ENCODE measurements at regions of chr2 and their contacts with region 1.

Region 1: DNA sequence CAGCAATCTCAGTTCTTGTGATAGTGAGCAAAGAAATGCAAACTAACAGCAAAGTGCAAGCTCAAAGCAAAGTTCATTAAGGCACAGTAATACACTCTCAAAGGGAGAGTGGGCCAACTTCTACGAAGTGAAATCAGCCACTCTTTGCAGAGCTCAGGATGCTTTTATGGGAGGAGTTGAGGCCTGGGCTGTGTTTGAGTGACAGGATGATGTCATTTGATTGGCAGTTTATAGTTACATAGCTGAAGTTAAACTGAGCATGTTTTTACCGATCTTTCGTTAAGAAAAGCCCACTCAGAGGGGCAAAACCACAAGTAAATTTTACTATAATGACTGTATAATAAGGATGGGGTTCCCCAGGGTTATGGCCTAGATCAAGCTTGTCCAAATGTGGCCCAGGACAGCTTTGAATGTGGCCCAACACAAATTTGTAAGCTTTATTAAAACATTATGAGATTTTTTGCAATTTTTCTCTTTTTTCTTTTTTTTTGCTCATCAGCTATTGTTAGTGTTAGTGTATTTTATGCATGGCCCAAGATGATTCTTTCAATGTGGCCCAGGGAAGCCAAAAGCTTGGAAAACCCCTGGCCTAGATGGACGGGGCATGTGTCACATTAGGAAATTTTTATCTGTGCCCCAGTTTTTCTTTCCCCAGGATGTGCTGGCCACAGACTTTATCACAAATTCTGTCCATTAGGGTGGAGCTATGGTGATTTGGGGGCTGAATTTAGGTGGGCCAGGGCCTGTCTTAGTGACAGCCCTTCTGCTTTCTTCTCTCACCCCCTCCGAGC is 8.3 kb upstream of the DNAH7 start:
- DNase-seq: no peak
- H3K4me3 Mint-ChIP-seq: no peak overlapping the region
- H3K27ac Mint-ChIP-seq: no peak overlapping the region
- H3K4me1 Mint-ChIP-seq: no peaks in the 10 kb centered on the region
- H3K27me3 Mint-ChIP-seq: no peaks in the 10 kb centered on the region
- CTCF ChIP-seq: no peak

Region 2: DNA sequence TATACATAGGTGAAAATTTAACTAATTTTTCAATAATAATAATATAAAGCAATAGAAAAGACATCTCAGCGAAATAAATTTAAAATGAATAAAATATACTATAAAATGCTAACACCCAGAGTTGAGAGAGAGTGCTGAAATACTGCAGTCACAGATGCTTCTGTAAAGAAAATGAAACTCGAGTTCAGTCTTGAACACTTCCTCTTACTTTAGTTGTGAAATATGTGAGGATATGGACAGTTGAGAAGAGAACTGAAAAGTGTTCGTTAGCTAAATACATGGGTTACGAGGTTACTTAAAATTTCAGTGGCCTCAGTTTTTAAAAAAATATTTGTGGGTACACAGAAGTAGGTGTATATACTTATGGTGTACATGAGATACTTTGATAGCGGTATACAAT is 115.1 kb before region 1 on chr2:
- CTCF ChIA-PET with region 1: no interaction called
- POLR2A ChIA-PET with region 1: no interaction called
- intact Hi-C with region 1: no loop called
- DNase-seq: no peak
- H3K4me3 Mint-ChIP-seq: no peak overlapping the region
- H3K27ac Mint-ChIP-seq: no peak overlapping the region
- H3K4me1 Mint-ChIP-seq: no peaks in the 10 kb centered on the region
- H3K27me3 Mint-ChIP-seq: no peaks in the 10 kb centered on the region
- CTCF ChIP-seq: no peak

Region 3: GRCh38 chr2:196000551-196000950 is 76.4 kb before region 1 on chr2:
- CTCF ChIA-PET with region 1: no interaction called
- POLR2A ChIA-PET with region 1: no interaction called
- intact Hi-C with region 1: no loop called
- DNase-seq: no peak
- H3K4me3 Mint-ChIP-seq: no peak overlapping the region
- H3K27ac Mint-ChIP-seq: no peak overlapping the region
- H3K4me1 Mint-ChIP-seq: no peaks in the 10 kb centered on the region
- H3K27me3 Mint-ChIP-seq: no peaks in the 10 kb centered on the region
- CTCF ChIP-seq: no peak

Region 4: GRCh38 chr2:196101325-196101991 is 24.5 kb after region 1 on chr2:
- CTCF ChIA-PET with region 1: interaction called, 12 read pairs
- POLR2A ChIA-PET with region 1: no interaction called
- intact Hi-C with region 1: no loop called
- DNase-seq: no peak
- H3K4me3 Mint-ChIP-seq: no peak overlapping the region
- H3K27ac Mint-ChIP-seq: no peak overlapping the region
- H3K4me1 Mint-ChIP-seq: no peaks in the 10 kb centered on the region
- H3K27me3 Mint-ChIP-seq: no peaks in the 10 kb centered on the region
- CTCF ChIP-seq: no peak

Region 5: DNA sequence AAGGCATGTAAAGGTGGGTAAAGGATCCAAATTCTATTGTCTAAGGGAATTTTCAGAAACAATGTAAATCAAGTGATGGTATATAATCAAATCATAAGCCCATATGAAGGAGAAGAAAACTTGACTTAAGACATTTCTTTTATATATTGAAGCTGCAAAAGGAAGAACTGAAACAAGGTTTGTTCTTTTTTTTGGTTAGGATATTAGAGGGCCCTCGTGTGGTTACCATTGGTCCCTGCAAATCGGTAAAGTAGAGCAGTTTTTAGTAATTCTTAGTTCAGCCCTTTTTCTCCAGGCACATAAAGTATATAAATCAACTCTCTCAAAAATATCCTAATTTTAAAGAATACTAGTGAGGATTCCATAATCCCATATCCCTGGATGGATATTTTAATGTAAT is 200.0 kb after region 1 on chr2:
- CTCF ChIA-PET with region 1: interaction called, 104 read pairs
- POLR2A ChIA-PET with region 1: interaction called, 4 read pairs
- intact Hi-C with region 1: loop called (anchors 1 kb)
- DNase-seq: no peak
- H3K4me3 Mint-ChIP-seq: no peak overlapping the region
- H3K27ac Mint-ChIP-seq: no peak overlapping the region
- H3K4me1 Mint-ChIP-seq: peaks cover 20% of the 10 kb centered on the region
- H3K27me3 Mint-ChIP-seq: no peaks in the 10 kb centered on the region
- CTCF ChIP-seq: peak; percentile 64

Region 6: GRCh38 chr2:196282381-196282780 is 205.4 kb after region 1 on chr2:
- CTCF ChIA-PET with region 1: interaction called, 104 read pairs
- POLR2A ChIA-PET with region 1: no interaction called
- intact Hi-C with region 1: loop called (anchors 1 kb)
- DNase-seq: no peak
- H3K4me3 Mint-ChIP-seq: no peak overlapping the region
- H3K27ac Mint-ChIP-seq: no peak overlapping the region
- H3K4me1 Mint-ChIP-seq: no peaks in the 10 kb centered on the region
- H3K27me3 Mint-ChIP-seq: no peaks in the 10 kb centered on the region
- CTCF ChIP-seq: no peak

Region 7: DNA sequence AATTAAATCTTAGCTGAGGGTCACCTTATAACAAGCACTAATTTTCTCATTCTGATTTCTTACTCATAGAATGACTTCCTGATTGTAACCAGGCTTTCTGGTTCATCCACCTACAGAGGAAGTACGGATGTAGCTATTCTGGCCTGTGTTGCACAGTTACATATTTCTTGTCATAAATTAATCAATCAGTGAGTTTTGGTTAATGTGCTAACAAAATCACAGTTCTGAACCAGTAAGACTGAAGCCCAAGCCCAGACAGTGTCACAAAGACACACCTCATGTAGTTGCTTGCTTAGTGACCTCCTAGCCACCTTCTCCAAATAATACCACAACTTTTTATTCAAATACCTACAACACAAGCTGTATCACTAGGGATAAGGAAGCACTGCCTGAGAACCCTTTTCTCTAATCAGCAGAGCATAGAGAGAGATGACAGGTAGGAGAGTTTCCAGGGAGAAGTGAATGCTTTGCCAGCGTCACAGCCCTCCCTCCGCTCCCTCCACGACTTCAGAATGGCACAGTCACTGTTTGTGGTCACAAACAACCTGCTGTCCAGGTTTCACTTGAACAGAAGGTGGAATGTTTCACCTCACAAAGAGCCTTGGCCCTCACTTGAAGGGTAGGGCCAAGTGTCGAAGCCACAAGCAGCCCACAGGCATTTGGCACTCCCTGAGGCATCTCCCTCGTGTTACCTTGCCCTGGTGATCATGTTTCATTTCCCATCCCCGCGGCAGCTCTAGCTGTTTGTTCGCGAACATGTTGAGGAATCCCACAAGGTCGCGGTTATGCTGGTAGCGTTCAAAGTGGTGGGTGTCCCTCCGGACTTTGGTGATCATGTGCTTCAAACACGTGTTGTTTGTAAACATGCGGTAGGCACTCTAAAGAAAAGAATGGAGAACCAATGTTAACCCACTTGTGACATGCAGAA is 215.2 kb after region 1 on chr2:
- CTCF ChIA-PET with region 1: interaction called, 19 read pairs
- POLR2A ChIA-PET with region 1: interaction called, 16 read pairs
- intact Hi-C with region 1: loop called (anchors 5 kb)
- DNase-seq: peak; percentile 87
- H3K4me3 Mint-ChIP-seq: peak overlapping the region; percentile 4
- H3K27ac Mint-ChIP-seq: peak overlapping the region; percentile 31
- H3K4me1 Mint-ChIP-seq: peaks cover 36% of the 10 kb centered on the region
- H3K27me3 Mint-ChIP-seq: no peaks in the 10 kb centered on the region
- CTCF ChIP-seq: no peak

Region 8: GRCh38 chr2:196337208-196337953 is 260.4 kb after region 1 on chr2:
- CTCF ChIA-PET with region 1: interaction called, 60 read pairs
- POLR2A ChIA-PET with region 1: no interaction called
- intact Hi-C with region 1: loop called (anchors 1 kb)
- DNase-seq: peak; percentile 49
- H3K4me3 Mint-ChIP-seq: no peak overlapping the region
- H3K27ac Mint-ChIP-seq: no peak overlapping the region
- H3K4me1 Mint-ChIP-seq: no peaks in the 10 kb centered on the region
- H3K27me3 Mint-ChIP-seq: no peaks in the 10 kb centered on the region
- CTCF ChIP-seq: peak; percentile 35

Region 9: GRCh38 chr2:196750982-196751635 is 674.1 kb after region 1 on chr2:
- CTCF ChIA-PET with region 1: interaction called, 4 read pairs
- POLR2A ChIA-PET with region 1: no interaction called
- intact Hi-C with region 1: loop called (anchors 10 kb)
- DNase-seq: peak; percentile 65
- H3K4me3 Mint-ChIP-seq: no peak overlapping the region
- H3K27ac Mint-ChIP-seq: no peak overlapping the region
- H3K4me1 Mint-ChIP-seq: no peaks in the 10 kb centered on the region
- H3K27me3 Mint-ChIP-seq: no peaks in the 10 kb centered on the region
- CTCF ChIP-seq: peak; percentile 36

Measured in MCF 10A (cell line).